SK-N-SH (cell line): ENCODE measurements at regions of chr18 and their contacts with region 1.

Region 1: DNA sequence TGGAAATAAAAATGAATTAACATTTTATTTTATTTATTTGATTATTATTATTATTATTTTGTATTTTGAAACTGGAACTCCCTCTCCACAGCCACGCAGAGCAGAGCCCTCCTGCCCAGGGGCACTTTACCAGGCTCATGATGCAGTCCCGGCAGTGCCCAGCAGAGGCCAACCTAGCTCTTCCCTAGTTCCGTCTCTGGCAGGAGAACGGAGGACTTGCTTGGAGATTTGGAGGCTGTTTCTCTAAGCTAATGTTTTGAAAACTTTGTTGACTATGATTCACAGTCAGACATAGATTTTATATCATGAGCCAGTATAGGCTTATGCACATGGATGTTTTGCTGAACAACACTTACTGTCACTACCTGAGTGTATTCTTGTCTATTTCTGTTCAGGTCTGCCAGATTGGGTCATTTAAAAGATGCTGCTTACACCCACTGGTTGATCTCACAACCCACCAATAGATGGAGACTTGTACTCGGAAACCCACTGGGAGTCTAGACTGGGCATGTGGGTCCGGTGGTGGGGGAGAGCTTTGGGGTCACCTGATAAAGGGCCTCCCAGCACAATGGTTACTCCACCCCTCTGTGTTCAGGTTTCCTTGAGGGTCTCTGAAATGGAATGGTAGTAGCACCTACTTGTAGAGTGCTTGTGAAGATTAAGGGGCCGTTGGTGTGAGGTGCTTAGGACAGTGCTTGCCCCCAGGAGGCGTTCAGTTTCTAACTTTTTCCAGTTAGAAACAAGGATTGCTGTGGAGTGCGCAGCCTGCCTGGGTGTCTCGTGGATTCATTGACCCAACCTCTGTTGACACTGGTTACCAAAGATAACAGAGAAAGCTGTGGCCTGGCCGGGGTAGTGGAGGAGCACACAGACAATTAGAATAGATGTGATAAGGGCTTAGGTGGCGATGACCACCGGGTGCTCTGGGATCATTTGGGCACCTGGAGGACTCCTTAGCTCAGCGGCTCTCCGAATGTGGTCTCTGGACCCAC is 177.3 kb downstream of the HAUS1 start:
- DNase-seq: peak; percentile 74
- H3K4me3 ChIP-seq: no peak overlapping the region; a peak in 1 of 4 replicates
- H3K27ac ChIP-seq: no peak overlapping the region
- H3K4me1 ChIP-seq: peaks cover 12 to 21% of the 10 kb centered on the region in 2 experiments; a peak in 2 of 4 replicates
- H3K27me3 ChIP-seq: no peaks in the 10 kb centered on the region
- CTCF ChIP-seq: peak; percentile 78
- EP300 ChIP-seq: no peak
- RAD21 ChIP-seq: peak; percentile 94

Region 2: GRCh38 chr18:46080156-46080555 is 201.3 kb before region 1 on chr18:
- CTCF ChIA-PET with region 1: no interaction called
- POLR2A ChIA-PET with region 1: no interaction called
- DNase-seq: no peak
- H3K4me3 ChIP-seq: no peak overlapping the region
- H3K27ac ChIP-seq: no peak overlapping the region
- H3K4me1 ChIP-seq: no peaks in the 10 kb centered on the region; a peak in 1 of 4 replicates
- H3K27me3 ChIP-seq: no peaks in the 10 kb centered on the region
- CTCF ChIP-seq: no peak
- EP300 ChIP-seq: no peak
- RAD21 ChIP-seq: no peak

Region 3: GRCh38 chr18:46264235-46264893 is 17.1 kb before region 1 on chr18:
- CTCF ChIA-PET with region 1: interaction called, 11 read pairs
- POLR2A ChIA-PET with region 1: no interaction called
- DNase-seq: no peak
- H3K4me3 ChIP-seq: no peak overlapping the region
- H3K27ac ChIP-seq: peak overlapping the region in 1 of 2 experiments; percentile 23; a peak in 2 of 4 replicates
- H3K4me1 ChIP-seq: peaks cover 0 to 31% of the 10 kb centered on the region in 2 experiments; a peak in 2 of 4 replicates
- H3K27me3 ChIP-seq: no peaks in the 10 kb centered on the region
- CTCF ChIP-seq: no peak
- EP300 ChIP-seq: no peak
- RAD21 ChIP-seq: no peak

Region 4: GRCh38 chr18:46378126-46378863 is 96.8 kb after region 1 on chr18:
- CTCF ChIA-PET with region 1: interaction called, 12 read pairs
- POLR2A ChIA-PET with region 1: no interaction called
- DNase-seq: no peak
- H3K4me3 ChIP-seq: no peak overlapping the region
- H3K27ac ChIP-seq: peak overlapping the region in 1 of 2 experiments; percentile 76; a peak in 2 of 4 replicates
- H3K4me1 ChIP-seq: peaks cover 0 to 45% of the 10 kb centered on the region in 2 experiments; a peak in 2 of 4 replicates
- H3K27me3 ChIP-seq: no peaks in the 10 kb centered on the region
- CTCF ChIP-seq: no peak
- EP300 ChIP-seq: no peak
- RAD21 ChIP-seq: no peak

Region 5: DNA sequence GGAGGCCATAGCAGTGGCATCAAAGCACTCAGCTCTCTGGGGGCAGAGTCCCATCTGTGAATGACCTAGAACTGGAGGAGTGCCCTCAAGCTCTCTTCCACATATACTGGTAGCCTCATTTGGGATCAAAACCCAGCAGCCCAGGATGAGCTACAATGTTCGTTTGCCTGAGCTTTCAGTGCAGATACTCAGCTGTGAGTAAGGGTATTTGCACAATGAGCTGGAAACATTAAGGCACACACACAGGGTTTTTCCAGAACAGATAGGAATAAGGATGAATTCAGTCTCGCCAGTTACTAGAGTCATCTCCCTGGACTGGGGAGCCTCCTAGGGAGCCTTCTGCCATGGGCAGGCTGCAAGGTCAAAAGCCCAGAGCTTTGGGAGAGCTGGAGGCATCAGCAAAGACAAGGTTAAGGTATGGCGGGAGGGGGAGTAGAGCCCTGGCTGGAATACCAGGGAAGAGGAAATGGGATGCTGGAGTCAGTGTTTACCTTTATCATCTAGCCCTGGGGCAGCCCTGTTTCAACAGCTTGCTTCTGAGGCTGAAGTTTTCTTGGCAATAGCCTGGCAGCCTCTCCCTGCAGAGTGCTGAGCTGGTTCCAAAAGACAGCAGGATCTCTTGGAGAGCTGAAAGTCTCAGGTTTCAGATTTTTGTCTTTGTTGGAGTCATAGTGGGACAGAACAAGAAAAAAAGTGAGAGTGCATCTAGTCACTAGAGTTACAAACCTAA is 187.9 kb after region 1 on chr18:
- CTCF ChIA-PET with region 1: interaction called, 19 read pairs
- POLR2A ChIA-PET with region 1: no interaction called
- DNase-seq: peak; percentile 61
- H3K4me3 ChIP-seq: no peak overlapping the region
- H3K27ac ChIP-seq: 0 out of 4 replicates have a peak overlapping the region, but pooled peaks of 1 of the 2 experiments have one; percentile 6
- H3K4me1 ChIP-seq: peaks cover 0 to 19% of the 10 kb centered on the region in 2 experiments; a peak in 1 of 4 replicates
- H3K27me3 ChIP-seq: no peaks in the 10 kb centered on the region; the same call in 1 of the 2 replicates
- CTCF ChIP-seq: no peak
- EP300 ChIP-seq: no peak
- RAD21 ChIP-seq: no peak

Region 6: DNA sequence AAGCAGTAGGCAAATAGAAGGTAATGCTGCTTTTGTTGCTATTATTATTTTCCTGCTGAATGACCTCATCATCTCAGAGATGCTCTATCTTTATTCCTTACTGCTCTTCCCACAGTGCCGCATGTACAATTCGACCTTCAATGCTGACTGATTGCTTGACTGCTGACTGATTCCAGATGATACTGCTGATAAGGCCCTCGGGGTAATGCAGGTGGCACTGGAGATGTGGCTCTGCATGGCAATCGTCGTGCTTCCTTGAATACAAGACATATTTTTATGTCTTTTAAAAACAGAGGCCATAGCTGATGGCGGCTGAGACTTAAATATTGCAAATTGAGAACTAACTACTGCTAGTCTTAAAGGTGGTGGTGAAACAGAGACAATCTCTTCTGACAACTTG is 228.9 kb after region 1 on chr18:
- CTCF ChIA-PET with region 1: interaction called, 68 read pairs
- POLR2A ChIA-PET with region 1: no interaction called
- DNase-seq: no peak
- H3K4me3 ChIP-seq: no peak overlapping the region
- H3K27ac ChIP-seq: no peak overlapping the region
- H3K4me1 ChIP-seq: no peaks in the 10 kb centered on the region
- H3K27me3 ChIP-seq: no peaks in the 10 kb centered on the region
- CTCF ChIP-seq: no peak
- EP300 ChIP-seq: no peak
- RAD21 ChIP-seq: no peak

Region 7: GRCh38 chr18:46660955-46661749 is 379.7 kb after region 1 on chr18:
- CTCF ChIA-PET with region 1: interaction called, 328 read pairs
- POLR2A ChIA-PET with region 1: interaction called, 4 read pairs
- DNase-seq: peak; percentile 48
- H3K4me3 ChIP-seq: no peak overlapping the region
- H3K27ac ChIP-seq: no peak overlapping the region
- H3K4me1 ChIP-seq: no peaks in the 10 kb centered on the region
- H3K27me3 ChIP-seq: no peaks in the 10 kb centered on the region; the same call in 1 of the 2 replicates
- CTCF ChIP-seq: no peak
- EP300 ChIP-seq: no peak
- RAD21 ChIP-seq: no peak